ENCODE measurements at regions of chr10 and their contacts with region 1.

Region 1: DNA sequence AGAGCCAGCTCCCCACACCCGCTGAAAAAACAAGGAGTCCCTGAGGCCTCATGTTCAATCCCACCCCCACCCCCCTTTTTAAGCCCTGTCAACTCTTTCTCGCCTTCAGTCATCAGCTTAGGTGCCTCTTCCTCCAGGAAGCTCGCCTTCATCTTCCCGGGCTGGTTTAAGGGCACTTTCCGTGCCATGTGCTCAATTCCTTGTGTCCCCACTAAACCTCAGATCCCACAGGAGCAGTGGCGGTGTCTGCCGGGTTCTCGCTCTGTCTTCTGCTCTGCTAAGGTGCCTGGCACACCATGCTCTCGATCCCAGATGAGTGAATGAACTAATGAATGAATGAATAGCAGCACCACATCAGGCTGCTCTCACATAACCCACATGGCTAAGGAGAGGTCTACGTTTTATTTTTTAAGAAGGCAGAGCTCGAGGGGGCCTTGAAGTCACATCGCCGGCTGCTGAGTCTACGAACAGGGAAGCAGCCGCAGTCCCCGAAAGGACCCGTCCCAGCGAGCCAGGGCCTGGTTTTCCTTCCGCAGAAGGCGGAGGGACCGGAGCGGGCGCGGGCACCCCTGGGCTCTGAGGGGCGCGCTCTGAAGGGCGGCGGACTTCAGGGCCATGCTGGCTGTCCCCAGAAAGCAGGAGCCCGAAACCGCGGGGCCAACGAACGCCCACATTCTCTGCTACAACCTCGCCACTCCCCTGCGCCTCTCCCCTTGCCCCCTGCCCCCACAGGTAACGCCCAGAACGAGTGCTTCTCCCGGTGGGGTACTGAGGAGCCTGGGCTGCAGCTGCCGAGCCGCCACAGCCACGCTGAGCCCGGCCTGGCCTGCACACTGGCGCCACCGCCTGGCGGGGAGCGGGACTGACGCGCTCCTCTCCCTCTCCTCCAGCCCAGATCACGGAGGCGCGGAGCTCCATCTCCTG is 73.4 kb upstream of the KCNMA1 start:
- DNase-seq: peak; percentile 71 to 82
- H3K4me3 ChIP-seq: peak overlapping the region; percentile 42 to 53
- H3K27ac ChIP-seq: no peak overlapping the region
- H3K4me1 ChIP-seq: peaks cover 0 to 12% (median 4%) of the 10 kb centered on the region in 4 donors
- H3K27me3 ChIP-seq: peaks cover 0 to 39% of the 10 kb centered on the region in 2 donors
- CTCF ChIP-seq: peak; percentile 92 to 100

Region 2: GRCh38 chr10:77163670-77164348 is 547.2 kb before region 1 on chr10:
- intact Hi-C with region 1: loop called (anchors 5 kb)
- DNase-seq: peak; percentile 62 to 75
- H3K4me3 ChIP-seq: no peak overlapping the region
- H3K27ac ChIP-seq: peak overlapping the region; percentile 47 to 53
- H3K4me1 ChIP-seq: peaks cover 0 to 38% (median 20%) of the 10 kb centered on the region in 4 donors
- H3K27me3 ChIP-seq: no peaks in the 10 kb centered on the region
- CTCF ChIP-seq: no peak